ENCODE measurements at regions of chr12 and their contacts with region 1.

Region 1: GRCh38 chr12:119176267-119176849 is 2.4 kb upstream of the HSPB8 start:
- DNase-seq: peak; percentile 92 to 98
- ATAC-seq: peak; percentile 61 to 64 (median 63)
- H3K4me3 ChIP-seq: peak overlapping the region; percentile 58
- H3K27ac ChIP-seq: peak overlapping the region; percentile 96
- H3K4me1 ChIP-seq: peaks cover 25% of the 10 kb centered on the region
- H3K27me3 ChIP-seq: no peaks in the 10 kb centered on the region
- CTCF ChIP-seq: no peak

Region 2: DNA sequence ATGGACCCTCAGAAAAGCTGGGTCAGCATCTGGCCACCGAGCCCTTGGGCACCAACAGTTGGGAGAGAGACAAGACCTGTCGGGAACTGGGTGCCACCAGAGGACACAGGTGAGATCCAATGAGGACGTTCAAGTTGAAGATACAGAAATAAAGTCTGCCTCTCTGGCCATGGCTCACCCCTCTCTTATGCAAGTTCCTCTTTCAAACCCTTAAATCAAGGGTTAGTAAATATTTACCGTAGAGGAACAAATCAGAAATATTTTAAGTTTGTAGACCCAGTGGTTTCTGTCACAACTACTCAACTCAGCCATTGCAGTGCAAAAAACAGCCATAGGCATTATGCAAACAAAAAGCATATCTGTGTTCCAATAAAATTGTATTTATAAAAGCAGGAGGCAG is 74.1 kb before region 1 on chr12:
- intact Hi-C with region 1: no loop called
- DNase-seq: no peak
- ATAC-seq: no peak
- H3K4me3 ChIP-seq: no peak overlapping the region
- H3K27ac ChIP-seq: no peak overlapping the region
- H3K4me1 ChIP-seq: no peaks in the 10 kb centered on the region
- H3K27me3 ChIP-seq: peaks cover 0 to 2% (median 0%) of the 10 kb centered on the region in 3 donors
- CTCF ChIP-seq: no peak

Region 3: DNA sequence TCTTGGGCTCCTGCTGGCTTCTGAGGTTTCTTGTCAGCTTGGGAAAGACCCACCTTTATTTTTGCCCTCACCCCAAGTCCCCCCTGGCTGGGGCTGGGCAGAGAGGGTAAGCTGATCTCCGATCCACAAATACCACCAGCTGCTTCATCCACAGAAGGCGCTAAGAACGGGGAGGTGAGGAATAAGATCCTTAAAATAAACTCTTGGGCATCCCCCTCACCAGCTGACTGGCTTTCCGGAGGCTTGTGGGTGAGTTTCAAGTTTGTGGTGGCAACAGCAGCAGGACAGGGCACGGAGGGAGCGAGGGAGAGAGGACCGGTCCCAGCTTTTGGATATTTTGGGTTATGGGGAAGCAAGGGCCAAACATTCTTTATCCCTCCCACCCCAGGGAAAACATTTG is 18.4 kb before region 1 on chr12:
- intact Hi-C with region 1: loop called (anchors 1 to 2 kb)
- DNase-seq: peak; percentile 55 to 83
- ATAC-seq: peak; percentile 85 to 90 (median 86)
- H3K4me3 ChIP-seq: peak overlapping the region; percentile 54
- H3K27ac ChIP-seq: peak overlapping the region; percentile 95
- H3K4me1 ChIP-seq: peaks cover 49% of the 10 kb centered on the region
- H3K27me3 ChIP-seq: no peaks in the 10 kb centered on the region
- CTCF ChIP-seq: no peak